MCF 10A (cell line): ENCODE measurements at regions of chr19 and their contacts with region 1.

Region 1: GRCh38 chr19:49676690-49677231 is 310 bp upstream of the PRMT1 start:
- DNase-seq: peak; percentile 100
- H3K4me3 Mint-ChIP-seq: peak overlapping the region; percentile 96
- H3K27ac Mint-ChIP-seq: peak overlapping the region; percentile 99
- H3K4me1 Mint-ChIP-seq: peaks cover 20% of the 10 kb centered on the region
- H3K27me3 Mint-ChIP-seq: no peaks in the 10 kb centered on the region
- CTCF ChIP-seq: no peak

Region 2: DNA sequence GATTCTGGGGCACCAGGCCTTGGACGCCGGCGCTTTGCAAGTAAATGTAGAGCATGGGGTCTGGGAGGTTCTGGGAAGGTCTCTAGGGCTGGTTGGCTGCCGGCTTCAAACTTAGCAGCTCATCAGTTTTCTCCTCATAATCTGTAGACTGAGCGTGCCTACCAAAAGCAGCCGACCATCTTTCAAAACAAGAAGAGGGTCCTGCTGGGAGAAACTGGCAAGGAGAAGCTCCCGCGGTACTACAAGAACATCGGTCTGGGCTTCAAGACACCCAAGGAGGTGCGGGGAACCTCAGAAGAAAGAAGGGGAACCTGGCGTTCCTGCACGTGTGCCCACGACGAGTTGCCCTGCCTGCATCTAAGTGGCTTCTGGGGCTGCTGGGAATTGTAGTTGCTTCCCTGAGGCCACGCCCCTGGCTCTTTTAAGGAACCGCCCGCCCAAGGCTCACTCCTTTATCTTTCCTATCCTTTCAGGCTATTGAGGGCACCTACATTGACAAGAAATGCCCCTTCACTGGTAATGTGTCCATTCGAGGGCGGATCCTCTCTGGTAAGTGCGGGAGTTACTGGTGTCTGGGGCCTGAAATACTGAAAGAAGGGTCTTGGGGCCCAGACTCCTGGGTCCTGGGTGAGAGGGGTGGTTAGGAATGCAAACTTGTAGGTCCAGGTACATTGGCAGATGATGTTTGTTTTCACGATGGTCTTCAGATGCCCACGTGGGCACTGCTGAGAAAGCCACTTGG is 179.5 kb before region 1 on chr19:
- CTCF ChIA-PET with region 1: no interaction called
- POLR2A ChIA-PET with region 1: interaction called, 17 read pairs
- intact Hi-C with region 1: no loop called
- DNase-seq: peak; percentile 68
- H3K4me3 Mint-ChIP-seq: peak overlapping the region; percentile 91
- H3K27ac Mint-ChIP-seq: peak overlapping the region; percentile 97
- H3K4me1 Mint-ChIP-seq: peaks cover 6% of the 10 kb centered on the region
- H3K27me3 Mint-ChIP-seq: no peaks in the 10 kb centered on the region
- CTCF ChIP-seq: no peak

Region 3: DNA sequence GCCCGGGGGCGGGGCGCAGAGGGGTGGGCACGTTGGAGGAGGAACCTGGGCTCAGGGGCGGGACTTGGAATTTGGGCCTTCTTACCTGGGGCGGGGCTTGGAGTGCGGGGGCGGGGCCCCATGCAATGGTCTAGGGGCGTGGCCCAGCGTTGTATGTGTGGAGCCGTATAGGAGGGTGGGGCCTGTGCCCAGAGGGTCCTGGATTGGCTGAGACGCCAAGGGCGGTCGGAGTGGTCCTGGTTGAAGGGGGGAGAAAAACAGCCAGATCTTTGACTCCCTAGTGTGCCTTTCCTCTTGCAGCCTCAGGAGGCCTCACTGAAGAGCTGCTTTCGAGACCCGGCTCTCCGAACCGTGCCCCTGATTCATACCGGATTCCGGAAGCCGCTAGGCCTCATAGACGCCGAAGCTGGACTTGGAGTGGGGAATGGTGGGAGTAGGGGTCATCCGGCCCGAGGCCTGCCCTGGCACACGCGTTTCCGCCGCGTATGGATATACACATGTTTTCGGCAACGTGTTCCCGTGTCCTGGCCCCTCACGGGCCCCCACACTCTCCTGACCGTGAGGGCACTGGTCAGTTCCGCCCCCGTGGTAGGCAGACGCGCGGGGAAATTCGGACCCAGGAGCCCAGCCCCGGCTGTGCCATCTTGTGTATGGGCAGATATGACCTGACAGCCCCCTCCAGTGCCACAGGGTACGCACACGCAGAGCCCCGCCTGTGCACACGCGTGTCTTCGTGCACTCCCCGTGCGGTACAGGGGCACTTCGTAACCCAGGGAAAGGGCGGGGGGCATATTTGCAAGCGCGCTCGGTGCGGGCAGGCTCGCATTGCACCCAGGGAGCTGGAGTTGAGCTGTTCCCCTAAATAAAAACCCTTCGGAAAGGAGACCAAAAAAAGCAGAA is 86.4 kb before region 1 on chr19:
- CTCF ChIA-PET with region 1: interaction called, 3 read pairs
- POLR2A ChIA-PET with region 1: interaction called, 11 read pairs
- intact Hi-C with region 1: loop called (anchors 5 kb)
- DNase-seq: peak; percentile 99
- H3K4me3 Mint-ChIP-seq: peak overlapping the region; percentile 71
- H3K27ac Mint-ChIP-seq: peak overlapping the region; percentile 33
- H3K4me1 Mint-ChIP-seq: peaks cover 27% of the 10 kb centered on the region
- H3K27me3 Mint-ChIP-seq: no peaks in the 10 kb centered on the region
- CTCF ChIP-seq: no peak

Region 4: GRCh38 chr19:49766007-49766937 is 89.5 kb after region 1 on chr19:
- CTCF ChIA-PET with region 1: no interaction called
- POLR2A ChIA-PET with region 1: interaction called, 26 read pairs
- intact Hi-C with region 1: loop called (anchors 5 kb)
- DNase-seq: peak; percentile 100
- H3K4me3 Mint-ChIP-seq: peak overlapping the region; percentile 90
- H3K27ac Mint-ChIP-seq: peak overlapping the region; percentile 99
- H3K4me1 Mint-ChIP-seq: peaks cover 19% of the 10 kb centered on the region
- H3K27me3 Mint-ChIP-seq: no peaks in the 10 kb centered on the region
- CTCF ChIP-seq: no peak

Region 5: GRCh38 chr19:49850473-49851342 is 173.9 kb after region 1 on chr19 and contains the start of gene PTOV1:
- CTCF ChIA-PET with region 1: interaction called, 3 read pairs
- POLR2A ChIA-PET with region 1: interaction called, 9 read pairs
- intact Hi-C with region 1: loop called (anchors 10 kb)
- DNase-seq: peak; percentile 93
- H3K4me3 Mint-ChIP-seq: peak within 1 kb of the TSS; percentile 84
- H3K27ac Mint-ChIP-seq: peak within 1 kb of the TSS; percentile 89
- H3K4me1 Mint-ChIP-seq: peaks cover 32% of the 10 kb centered on the region
- H3K27me3 Mint-ChIP-seq: no peaks in the 10 kb centered on the region
- CTCF ChIP-seq: no peak
- total RNA-seq, gene PTOV1: 68.5 and 78.8 TPM in 2 replicates